Natural killer cell (primary cell): ENCODE measurements at regions of chr10 and their contacts with region 1.

Region 1: DNA sequence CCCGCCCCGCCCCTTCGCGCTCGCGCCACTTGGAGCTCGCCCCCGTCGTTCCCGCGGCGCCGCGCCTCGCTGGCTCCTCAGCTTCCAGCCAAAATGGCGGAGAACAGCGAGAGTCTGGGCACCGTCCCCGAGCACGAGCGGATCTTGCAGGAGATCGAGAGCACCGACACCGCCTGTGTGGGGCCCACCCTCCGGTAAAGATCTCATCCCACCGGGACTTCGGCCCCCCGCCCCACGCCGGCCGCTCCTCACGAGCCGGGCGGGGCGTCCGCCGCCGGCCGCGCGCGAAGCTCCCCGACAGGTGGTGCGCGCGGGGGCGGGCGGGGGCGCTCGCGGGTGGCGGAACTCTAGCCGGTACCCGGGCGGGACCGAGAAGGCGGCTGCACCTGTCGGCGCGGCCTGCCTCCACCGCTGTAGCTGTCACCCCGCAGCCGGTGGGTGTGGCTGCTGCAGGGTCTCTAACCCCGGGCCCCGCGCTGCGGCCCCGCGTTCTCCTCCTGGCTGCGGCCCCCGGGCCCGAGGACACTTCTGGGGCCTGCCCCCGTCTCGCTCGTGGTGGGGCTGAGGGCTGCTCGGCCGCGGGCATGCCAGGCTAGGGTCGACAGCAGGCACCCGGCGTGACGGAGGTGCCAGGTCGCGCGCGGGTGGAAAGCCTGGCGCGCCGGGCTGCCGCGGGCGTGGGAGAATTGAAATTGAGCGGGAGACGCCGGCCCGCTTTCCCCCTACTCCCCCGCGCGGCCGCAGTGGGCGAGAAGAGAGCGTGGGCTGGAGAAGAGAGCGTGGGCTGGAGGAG is at the start of gene EXOC6:
- DNase-seq: peak; percentile 84 to 94
- ATAC-seq: peak; percentile 82 to 92 (median 83)
- H3K4me3 ChIP-seq: peak within 1 kb of the TSS; percentile 76
- H3K4me3 Mint-ChIP-seq: peak within 1 kb of the TSS; percentile 91
- H3K27ac ChIP-seq: peak within 1 kb of the TSS; percentile 94
- H3K27ac Mint-ChIP-seq: peak within 1 kb of the TSS; percentile 80 to 89
- H3K4me1 ChIP-seq: peaks cover 14% of the 10 kb centered on the region
- H3K4me1 Mint-ChIP-seq: peaks cover 20 to 24% of the 10 kb centered on the region in 2 donors
- H3K27me3 ChIP-seq: no peaks in the 10 kb centered on the region
- H3K27me3 Mint-ChIP-seq: no peaks in the 10 kb centered on the region
- CTCF ChIP-seq: peak; percentile 26
- total RNA-seq, gene EXOC6: 12.1 to 18.2 (median 16.1) TPM

Region 2: DNA sequence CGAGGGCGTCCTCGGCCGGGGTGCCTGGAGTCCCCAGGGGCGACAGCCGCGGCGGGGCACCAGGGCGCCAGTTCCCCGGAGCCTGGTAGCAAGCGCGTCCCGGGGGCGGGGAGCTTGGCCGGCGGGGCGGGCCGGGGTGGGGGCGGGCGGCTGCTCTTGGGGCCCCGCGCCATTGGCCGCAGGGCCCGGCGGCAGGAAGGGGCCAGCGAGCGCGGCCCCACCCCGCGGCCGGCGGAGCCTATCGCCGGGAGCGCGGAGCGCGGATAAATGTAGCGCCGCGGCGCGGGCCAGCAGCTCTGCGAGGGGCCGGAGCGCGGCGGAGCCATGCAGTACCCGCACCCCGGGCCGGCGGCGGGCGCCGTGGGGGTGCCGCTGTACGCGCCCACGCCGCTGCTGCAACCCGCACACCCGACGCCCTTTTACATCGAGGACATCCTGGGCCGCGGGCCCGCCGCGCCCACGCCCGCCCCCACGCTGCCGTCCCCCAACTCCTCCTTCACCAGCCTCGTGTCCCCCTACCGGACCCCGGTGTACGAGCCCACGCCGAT is 158.9 kb before region 1 on chr10 and contains the start of gene HHEX:
- intact Hi-C with region 1: loop called (anchors 1 kb)
- DNase-seq: peak; percentile 55 to 63
- ATAC-seq: peak; percentile 65 to 85 (median 76)
- H3K4me3 ChIP-seq: peak within 1 kb of the TSS; percentile 72
- H3K4me3 Mint-ChIP-seq: peak within 1 kb of the TSS; percentile 92
- H3K27ac ChIP-seq: peak within 1 kb of the TSS; percentile 65
- H3K27ac Mint-ChIP-seq: peak within 1 kb of the TSS; percentile 82 to 92
- H3K4me1 ChIP-seq: peaks cover 30% of the 10 kb centered on the region
- H3K4me1 Mint-ChIP-seq: peaks cover 30 to 42% of the 10 kb centered on the region in 2 donors
- H3K27me3 ChIP-seq: peaks cover 11% of the 10 kb centered on the region
- H3K27me3 Mint-ChIP-seq: peaks cover 7 to 17% of the 10 kb centered on the region in 2 donors
- CTCF ChIP-seq: no peak
- total RNA-seq, gene HHEX: 19.5 to 24.0 (median 20.3) TPM

Region 3: GRCh38 chr10:93496322-93497041 is 647.8 kb after region 1 on chr10 and contains the start of gene CEP55:
- intact Hi-C with region 1: loop called (anchors 5 kb)
- DNase-seq: peak; percentile 94 to 96
- ATAC-seq: peak; percentile 99 to 100 (median 99)
- H3K4me3 ChIP-seq: peak within 1 kb of the TSS; percentile 95
- H3K4me3 Mint-ChIP-seq: peak within 1 kb of the TSS; percentile 91
- H3K27ac ChIP-seq: peak within 1 kb of the TSS; percentile 17
- H3K27ac Mint-ChIP-seq: peak within 1 kb of the TSS; percentile 73 to 79
- H3K4me1 ChIP-seq: peaks cover 14% of the 10 kb centered on the region
- H3K4me1 Mint-ChIP-seq: peaks cover 11 to 18% of the 10 kb centered on the region in 2 donors
- H3K27me3 ChIP-seq: no peaks in the 10 kb centered on the region
- H3K27me3 Mint-ChIP-seq: peaks cover 11 to 16% of the 10 kb centered on the region in 2 donors
- CTCF ChIP-seq: no peak
- total RNA-seq, gene CEP55: 0.35 to 0.85 (median 0.50) TPM

Region 4: GRCh38 chr10:94362360-94363250 is 1514.0 kb after region 1 on chr10 and contains the start of gene NOC3L:
- intact Hi-C with region 1: loop called (anchors 10 kb)
- DNase-seq: peak; percentile 91 to 97
- ATAC-seq: peak; percentile 93 to 98 (median 94)
- H3K4me3 ChIP-seq: peak within 1 kb of the TSS; percentile 73
- H3K4me3 Mint-ChIP-seq: peak within 1 kb of the TSS; percentile 98
- H3K27ac ChIP-seq: peak within 1 kb of the TSS; percentile 88
- H3K27ac Mint-ChIP-seq: peak within 1 kb of the TSS; percentile 95 to 97
- H3K4me1 ChIP-seq: peaks cover 5% of the 10 kb centered on the region
- H3K4me1 Mint-ChIP-seq: peaks cover 18 to 38% of the 10 kb centered on the region in 2 donors
- H3K27me3 ChIP-seq: no peaks in the 10 kb centered on the region
- H3K27me3 Mint-ChIP-seq: peaks cover 0 to 13% of the 10 kb centered on the region in 2 donors
- CTCF ChIP-seq: peak; percentile 80
- total RNA-seq, gene NOC3L: 10.8 to 18.6 (median 13.1) TPM